Activated naive CD4-positive, alpha-beta T cell treated with anti-CD3 and anti-CD28 coated beads for 36 hours (primary cell): ENCODE measurements at regions of chr7 and their contacts with region 1.

Region 1: DNA sequence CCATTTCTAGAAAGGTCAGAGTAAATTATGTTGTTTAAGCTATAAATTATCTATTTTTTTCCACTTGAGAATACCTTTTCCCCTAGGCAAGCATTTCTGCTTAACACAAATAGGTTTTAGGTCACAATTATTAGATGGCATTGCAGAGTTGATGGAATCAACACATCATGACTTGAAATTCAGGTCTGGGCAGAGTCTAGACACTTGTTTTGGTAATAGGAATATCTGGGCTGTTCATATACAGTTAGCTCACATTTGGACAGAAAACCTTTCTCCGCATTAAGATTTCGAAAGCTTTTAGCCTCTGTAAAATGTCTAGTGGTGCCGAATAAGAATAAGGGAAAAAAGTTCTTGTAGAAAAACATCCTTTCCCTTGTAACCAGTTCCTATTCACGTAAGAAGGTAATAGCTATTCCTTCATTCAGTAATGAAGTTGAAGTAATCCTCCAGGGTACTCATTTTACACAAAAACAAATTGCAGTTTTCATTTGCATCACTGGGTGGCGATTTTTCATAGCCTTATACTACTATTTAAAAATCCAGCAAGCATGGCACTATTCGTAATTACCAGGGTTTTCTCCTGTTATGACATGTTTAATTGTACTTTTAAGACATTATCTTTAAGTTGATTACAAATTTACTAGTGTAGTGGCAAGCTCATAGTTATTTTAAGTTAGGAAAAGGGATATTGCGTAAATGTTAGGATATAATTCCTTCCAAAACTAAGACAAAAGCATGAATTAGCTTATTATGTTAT is 37.0 kb downstream of the RPA3 start:
- DNase-seq: peak; percentile 66
- H3K4me3 Mint-ChIP-seq: no peak overlapping the region
- H3K27ac Mint-ChIP-seq: peak overlapping the region; percentile 9
- H3K4me1 Mint-ChIP-seq: peaks cover 36% of the 10 kb centered on the region
- H3K27me3 Mint-ChIP-seq: no peaks in the 10 kb centered on the region

Region 2: GRCh38 chr7:7693881-7694280 is 12.5 kb after region 1 on chr7:
- CTCF ChIA-PET with region 1: interaction called, 14 read pairs
- intact Hi-C with region 1: no loop called
- DNase-seq: no peak
- H3K4me3 Mint-ChIP-seq: no peak overlapping the region
- H3K27ac Mint-ChIP-seq: no peak overlapping the region
- H3K4me1 Mint-ChIP-seq: peaks cover 5% of the 10 kb centered on the region
- H3K27me3 Mint-ChIP-seq: no peaks in the 10 kb centered on the region

Region 3: DNA sequence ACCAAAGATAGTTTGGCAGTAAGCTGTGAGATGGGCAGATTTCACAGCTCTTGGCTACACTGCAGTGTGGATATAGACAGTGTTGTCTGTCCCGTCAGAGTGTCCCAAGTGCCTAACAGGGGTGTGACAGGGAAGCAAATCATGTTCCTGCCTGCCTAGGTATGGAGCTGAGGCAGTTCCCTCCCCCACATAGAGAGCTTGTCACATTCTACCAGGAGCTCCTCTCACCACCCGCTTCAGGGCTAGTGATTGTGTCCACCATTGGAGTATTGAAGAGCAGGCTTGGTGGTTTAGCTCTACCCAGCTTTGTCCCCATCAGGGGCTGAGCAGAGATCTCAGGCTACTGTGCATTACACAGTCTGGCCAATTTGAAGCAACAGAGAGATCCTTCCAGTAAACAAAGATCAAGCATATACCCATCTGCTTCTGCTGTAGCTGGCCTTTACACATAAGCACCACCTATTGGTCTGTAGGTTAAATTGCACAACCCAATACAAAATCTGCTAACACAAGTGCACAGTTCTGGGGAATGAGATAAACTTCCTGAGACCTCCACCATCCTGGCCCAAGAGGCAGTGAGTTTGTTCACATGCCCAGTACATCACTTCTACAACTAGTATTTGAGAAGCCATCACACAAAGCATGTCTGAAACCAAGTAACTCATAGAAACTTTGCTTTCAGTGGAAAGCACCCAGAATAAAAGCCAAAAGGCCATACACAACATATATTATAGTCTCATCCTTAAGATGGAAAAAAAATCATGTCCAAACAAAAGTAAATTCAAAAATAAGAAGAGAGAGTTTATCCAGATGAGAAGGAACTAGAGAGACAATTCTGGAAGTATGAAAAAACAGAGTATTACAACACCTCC is 354.5 kb after region 1 on chr7:
- CTCF ChIA-PET with region 1: interaction called, 13 read pairs
- intact Hi-C with region 1: loop called (anchors 1 kb)
- DNase-seq: no peak
- H3K4me3 Mint-ChIP-seq: no peak overlapping the region
- H3K27ac Mint-ChIP-seq: no peak overlapping the region
- H3K4me1 Mint-ChIP-seq: peaks cover 20% of the 10 kb centered on the region
- H3K27me3 Mint-ChIP-seq: no peaks in the 10 kb centered on the region

Region 4: DNA sequence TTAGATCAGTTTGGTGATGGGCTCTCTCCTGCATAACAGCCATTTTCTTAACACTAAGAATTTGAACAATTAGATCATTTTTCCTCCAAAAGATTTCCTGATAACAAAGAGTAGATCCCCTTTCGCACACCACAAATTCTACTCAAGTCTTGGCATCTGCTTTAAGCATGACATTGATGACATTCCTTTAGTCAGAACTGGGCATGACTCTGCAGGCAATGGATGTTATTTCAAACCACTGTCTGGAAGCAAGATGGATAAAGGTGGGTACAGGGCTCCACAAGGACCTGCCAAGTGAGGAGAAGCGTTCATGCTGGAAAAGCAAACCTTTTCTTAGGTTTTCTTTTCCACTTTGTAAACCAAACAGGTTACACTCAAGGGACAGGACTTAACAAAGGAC is 410.8 kb after region 1 on chr7:
- CTCF ChIA-PET with region 1: no interaction called
- intact Hi-C with region 1: loop called (anchors 1 kb)
- DNase-seq: no peak
- H3K4me3 Mint-ChIP-seq: no peak overlapping the region
- H3K27ac Mint-ChIP-seq: no peak overlapping the region
- H3K4me1 Mint-ChIP-seq: no peaks in the 10 kb centered on the region
- H3K27me3 Mint-ChIP-seq: no peaks in the 10 kb centered on the region

Region 5: DNA sequence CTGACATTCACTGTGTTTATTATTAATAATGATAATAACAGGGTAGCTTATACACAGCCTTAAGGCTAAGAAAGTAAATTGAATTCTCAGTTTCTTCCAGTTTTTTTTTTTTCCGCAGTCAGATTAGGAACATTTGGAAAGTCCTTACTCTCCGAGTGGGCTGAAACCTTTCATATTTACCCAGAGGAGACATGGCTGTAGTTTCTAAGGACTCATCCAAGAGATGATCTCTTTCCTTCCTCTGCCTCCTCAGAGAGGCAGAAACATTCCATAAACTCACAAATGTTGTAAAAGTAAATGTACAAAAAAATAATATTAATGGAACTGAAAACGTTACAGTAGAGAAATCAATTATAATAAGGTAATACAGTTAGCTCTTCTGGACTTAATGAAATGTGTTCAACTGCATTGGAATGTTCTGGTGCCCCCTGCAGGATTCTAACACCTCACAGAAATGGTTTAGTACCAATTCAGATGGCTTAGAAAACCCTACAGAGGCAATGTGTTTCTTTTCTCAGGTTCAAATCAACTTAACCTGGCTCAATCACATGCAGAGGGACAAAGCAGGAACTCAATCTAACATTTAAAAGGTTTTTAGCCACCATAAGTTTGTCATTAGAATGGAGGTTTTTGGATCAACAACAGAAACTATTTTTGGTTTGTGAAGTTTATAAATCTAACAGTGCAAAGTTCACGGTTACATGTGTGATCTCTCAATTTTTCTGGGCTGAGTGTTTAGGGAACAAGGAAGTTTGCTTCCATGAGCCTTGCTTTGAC is 508.9 kb after region 1 on chr7:
- CTCF ChIA-PET with region 1: interaction called, 22 read pairs
- intact Hi-C with region 1: loop called (anchors 1 kb)
- DNase-seq: peak; percentile 84
- H3K4me3 Mint-ChIP-seq: no peak overlapping the region
- H3K27ac Mint-ChIP-seq: no peak overlapping the region
- H3K4me1 Mint-ChIP-seq: peaks cover 10% of the 10 kb centered on the region
- H3K27me3 Mint-ChIP-seq: no peaks in the 10 kb centered on the region

Region 6: GRCh38 chr7:8310876-8311275 is 629.5 kb after region 1 on chr7:
- CTCF ChIA-PET with region 1: no interaction called
- intact Hi-C with region 1: no loop called
- DNase-seq: no peak
- H3K4me3 Mint-ChIP-seq: no peak overlapping the region
- H3K27ac Mint-ChIP-seq: no peak overlapping the region
- H3K4me1 Mint-ChIP-seq: no peaks in the 10 kb centered on the region
- H3K27me3 Mint-ChIP-seq: peaks cover 9% of the 10 kb centered on the region